AG04449 (cell line): ENCODE measurements at regions of chr20 and their contacts with region 1.

Region 1: DNA sequence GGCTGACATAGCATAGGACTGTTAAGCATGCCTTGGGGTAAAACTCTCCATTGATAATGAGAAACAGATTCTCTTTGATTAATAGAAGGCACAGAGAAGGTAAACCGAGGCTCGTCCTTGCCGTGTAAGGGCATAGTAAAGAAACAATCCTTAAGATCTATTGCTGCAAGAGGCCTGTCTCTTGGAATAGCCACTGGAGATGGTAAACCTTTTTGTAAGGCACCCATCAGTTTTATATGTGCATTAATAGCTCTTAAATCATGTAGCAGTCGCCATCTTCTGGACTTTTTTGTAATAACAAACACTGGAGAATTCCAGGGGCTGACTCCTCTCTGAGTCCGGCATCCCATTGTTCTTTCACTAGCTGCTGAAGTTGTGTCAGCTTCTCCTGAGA is 8.4 kb upstream of the ABHD12 start:
- DNase-seq: peak; percentile 59
- H3K4me3 ChIP-seq: no peak overlapping the region
- CTCF ChIP-seq: peak; percentile 35

Region 2: GRCh38 chr20:24992487-24993205 is 406.4 kb before region 1 on chr20 and contains the start of gene APMAP:
- CTCF ChIA-PET with region 1: interaction called, 54 read pairs
- POLR2A ChIA-PET with region 1: no interaction called
- DNase-seq: peak; percentile 24
- H3K4me3 ChIP-seq: peak within 1 kb of the TSS; percentile 94
- CTCF ChIP-seq: no peak

Region 3: GRCh38 chr20:25223179-25223661 is 175.8 kb before region 1 on chr20:
- CTCF ChIA-PET with region 1: interaction called, 11 read pairs
- POLR2A ChIA-PET with region 1: no interaction called
- DNase-seq: peak; percentile 50
- H3K4me3 ChIP-seq: no peak overlapping the region
- CTCF ChIP-seq: peak; percentile 0

Region 4: DNA sequence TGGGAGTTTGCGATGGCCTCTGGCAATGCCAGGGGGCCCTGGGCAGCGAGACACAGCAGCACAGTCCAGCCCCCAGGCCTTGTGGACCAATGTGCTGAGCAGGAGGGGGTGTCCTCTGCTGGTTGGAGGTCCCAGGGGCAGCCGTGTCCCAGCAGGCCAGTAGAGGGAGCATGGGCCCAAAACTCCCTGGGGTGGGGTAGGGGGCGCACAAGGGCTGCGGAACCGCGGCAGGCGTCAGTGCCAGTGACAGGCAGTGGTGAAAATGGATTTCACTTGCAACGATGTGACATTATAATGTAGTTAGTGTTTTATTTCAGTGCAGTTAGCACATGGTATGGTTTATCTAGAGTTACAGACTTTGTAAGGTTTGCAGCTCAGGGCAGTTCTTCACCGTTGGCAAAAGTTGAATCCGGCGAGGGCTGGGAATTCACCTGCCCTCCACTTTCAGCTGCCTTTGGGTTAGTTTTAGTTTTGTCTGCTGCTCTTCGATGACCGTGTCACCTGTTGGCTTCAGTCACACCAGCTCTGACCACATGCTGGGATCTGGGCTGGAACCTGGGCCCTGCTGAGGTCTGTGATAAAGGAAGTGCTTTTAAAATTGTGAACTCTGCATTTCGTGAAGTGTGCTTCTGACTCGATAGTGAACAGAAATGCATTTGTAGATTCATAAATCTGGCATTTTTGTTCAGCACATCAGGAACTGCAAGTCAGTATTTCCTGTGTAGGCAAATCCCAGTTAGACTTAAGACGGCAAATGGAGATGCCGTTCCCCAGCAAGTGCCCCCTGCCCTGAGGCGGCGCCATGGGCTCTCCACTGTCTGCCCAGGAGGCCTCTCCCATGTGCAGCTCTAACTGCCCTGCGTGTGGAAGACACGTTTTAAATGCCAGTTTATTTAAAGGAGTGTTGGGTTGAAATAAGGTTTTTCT is 104.3 kb before region 1 on chr20:
- CTCF ChIA-PET with region 1: interaction called, 99 read pairs
- POLR2A ChIA-PET with region 1: no interaction called
- DNase-seq: no peak
- H3K4me3 ChIP-seq: no peak overlapping the region
- CTCF ChIP-seq: peak; percentile 100

Region 5: GRCh38 chr20:25310268-25310920 is 88.6 kb before region 1 on chr20:
- CTCF ChIA-PET with region 1: interaction called, 66 read pairs
- POLR2A ChIA-PET with region 1: interaction called, 3 read pairs
- DNase-seq: peak; percentile 82
- H3K4me3 ChIP-seq: peak overlapping the region; percentile 56
- CTCF ChIP-seq: peak; percentile 75

Region 6: DNA sequence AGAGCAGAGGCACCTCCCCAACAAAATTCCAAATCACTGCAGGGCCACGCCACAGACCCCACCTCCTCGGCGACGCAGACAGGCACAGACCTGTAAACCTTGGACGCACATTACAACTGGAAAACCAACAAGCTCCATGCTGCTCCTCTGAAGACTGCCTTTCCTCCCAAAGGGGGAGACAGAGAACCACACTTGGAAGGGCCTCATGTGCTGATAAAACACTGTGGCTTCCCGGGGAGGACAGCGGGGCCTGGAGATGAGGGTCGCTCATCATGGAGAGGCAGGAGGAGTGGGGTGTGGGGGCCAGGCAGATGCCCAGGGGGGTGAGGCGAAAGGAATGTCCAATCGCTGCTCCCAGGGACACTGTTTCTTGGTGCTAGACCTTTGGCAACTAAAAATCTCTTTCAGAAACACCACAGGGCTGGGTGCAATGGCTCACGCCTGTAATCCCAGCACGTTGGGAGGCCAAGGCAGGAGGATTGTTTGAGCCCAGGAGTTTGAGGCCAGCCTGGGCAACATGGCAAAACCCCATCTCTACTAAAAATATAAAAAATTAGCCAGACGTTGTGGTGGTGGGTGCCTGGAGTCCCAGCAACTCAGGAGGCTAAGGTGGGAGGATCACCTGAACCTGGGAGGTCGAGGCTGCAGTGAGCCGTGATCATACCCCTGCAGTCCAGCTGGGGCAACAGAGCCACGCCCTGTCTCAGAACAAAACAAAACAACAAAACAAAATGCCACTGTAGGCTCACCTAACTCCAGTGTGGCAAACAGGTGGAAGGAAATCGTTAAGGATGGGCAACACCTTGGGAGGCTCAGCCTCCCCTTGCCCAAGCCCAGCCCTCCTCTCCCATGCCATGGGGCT is 62.2 kb before region 1 on chr20:
- CTCF ChIA-PET with region 1: interaction called, 22 read pairs
- POLR2A ChIA-PET with region 1: no interaction called
- DNase-seq: no peak
- H3K4me3 ChIP-seq: no peak overlapping the region
- CTCF ChIP-seq: peak; percentile 49

Region 7: DNA sequence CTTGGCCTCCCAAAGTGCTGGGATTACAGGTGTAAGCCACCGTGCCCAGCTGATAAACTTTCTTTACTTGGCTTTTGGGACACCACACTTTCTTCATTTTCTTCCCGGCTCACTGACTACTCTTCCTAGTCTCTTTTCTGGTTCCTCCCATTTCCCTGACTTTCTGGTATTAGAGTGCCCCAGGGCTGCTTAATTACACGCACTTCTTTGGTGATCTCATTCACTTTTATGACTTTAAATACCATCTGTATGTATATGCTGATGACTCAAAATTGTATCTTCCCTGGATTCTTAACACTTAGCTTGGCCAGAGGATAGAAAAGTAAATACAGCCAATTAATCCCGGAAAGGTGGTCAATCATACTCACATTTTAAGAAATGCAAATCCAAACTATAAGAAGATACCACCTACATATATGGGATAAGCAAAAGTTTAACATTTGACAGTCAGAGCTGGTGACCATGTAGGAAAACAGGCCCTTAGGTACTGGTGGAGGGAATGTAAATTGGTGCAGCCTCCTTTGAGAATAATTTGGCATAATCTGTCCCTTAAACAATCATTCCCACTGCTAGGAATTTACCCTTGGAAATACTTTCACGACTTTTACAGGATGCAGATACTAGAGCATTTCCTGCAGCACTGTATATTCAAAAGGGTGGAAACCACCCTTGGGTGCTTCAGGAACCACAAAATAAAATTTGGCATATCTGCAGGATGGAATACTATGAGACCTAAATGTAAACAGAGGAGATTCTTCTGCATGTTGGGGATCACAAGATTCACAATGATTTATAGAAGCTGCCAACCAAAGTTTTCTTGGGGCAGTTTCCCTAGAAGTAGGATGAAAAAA is 234.1 kb after region 1 on chr20:
- CTCF ChIA-PET with region 1: no interaction called
- POLR2A ChIA-PET with region 1: no interaction called
- DNase-seq: peak; percentile 46
- H3K4me3 ChIP-seq: no peak overlapping the region
- CTCF ChIP-seq: no peak